ENCODE measurements at regions of chr16 and their contacts with region 1.

Region 1: DNA sequence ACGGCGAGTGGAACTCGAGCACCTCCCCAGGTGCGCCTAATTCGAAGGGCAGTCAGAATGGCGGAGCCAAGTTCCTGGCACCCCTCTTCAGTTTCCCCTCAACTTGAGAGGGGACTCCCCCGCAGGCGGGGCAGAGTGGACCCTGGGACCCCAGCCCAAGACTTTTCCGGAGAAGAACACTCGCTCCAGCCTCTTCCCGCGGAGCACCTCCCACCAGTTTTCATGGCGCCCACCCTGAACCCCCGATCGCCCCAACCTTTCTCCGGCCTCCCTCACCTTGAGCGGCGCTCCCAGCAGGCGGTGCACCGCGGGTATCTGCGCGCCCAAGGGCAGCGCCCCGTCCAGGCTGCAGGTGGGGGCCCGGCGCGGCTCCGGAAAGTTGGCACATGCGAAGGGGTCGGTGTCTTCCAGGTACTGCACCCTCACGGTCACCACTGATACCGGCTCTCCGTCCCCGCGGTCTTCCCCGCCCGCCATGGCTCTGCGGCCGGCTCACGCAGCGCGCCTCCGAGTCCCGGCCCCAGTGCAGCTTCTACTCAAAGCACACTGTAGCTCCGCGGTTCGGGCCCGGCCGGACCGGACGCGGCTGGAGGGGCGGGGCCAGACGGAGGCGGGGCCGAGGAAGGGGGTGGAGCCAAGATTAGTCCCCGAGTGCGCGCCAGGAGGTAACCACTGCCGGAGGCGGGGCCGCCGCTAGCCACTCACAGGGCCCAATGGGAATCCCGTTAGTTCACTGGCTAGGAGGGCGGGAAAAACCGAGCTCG is at the start of gene FHOD1:
- DNase-seq: peak; percentile 83
- ATAC-seq: peak; percentile 64
- H3K4me3 ChIP-seq: peak within 1 kb of the TSS; percentile 71 to 92
- H3K27ac ChIP-seq: peak within 1 kb of the TSS; percentile 92
- H3K4me1 ChIP-seq: peaks cover 39 to 67% of the 10 kb centered on the region in 2 experiments
- H3K27me3 ChIP-seq: no peaks in the 10 kb centered on the region
- CTCF ChIP-seq: no peak
- POLR2A ChIP-seq: peak; percentile 41
- RAD21 ChIP-seq: no peak
- total RNA-seq, gene FHOD1: 69.2 TPM

Region 2: DNA sequence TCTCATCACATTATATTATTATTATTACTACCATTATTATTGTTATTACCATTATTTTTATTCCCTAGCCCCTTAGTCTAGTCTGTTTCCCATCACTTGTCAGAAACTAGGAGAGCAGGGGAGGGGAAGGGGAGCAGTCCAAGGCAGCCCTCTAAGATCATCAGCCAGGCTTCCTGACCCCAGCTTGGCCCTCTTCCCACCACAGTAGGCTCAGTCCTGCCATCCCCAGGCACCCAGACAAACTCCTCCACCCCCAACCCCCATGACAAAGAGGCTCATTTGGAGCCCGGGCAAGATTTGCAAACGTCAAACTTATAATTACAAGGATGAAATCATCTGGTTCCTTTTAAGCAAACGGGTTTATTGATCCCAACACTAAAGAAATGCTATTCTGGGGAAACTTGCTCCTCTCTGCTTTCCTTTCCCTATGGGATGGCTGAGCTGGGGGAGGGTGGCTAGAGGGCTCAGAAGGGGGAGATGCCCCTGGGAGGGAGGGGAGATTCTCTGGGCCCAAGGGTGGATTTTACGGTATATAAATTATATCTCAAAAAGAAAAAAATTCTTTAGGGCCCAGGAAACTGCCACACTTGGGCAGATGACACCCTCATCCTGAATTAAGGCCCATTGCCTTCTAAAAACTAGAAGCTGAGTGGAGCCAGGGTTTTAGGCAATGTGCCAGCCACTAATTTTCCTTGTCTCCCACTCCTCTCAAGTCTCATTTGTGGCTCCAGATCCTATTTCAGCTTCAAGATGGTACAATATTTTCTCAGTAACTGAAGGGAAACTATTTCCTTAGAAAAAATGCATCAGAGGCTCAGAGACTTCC is 222.5 kb before region 1 on chr16:
- CTCF ChIA-PET with region 1: no interaction called
- POLR2A ChIA-PET with region 1: no interaction called
- RAD21 ChIA-PET with region 1: no interaction called
- intact Hi-C with region 1: no loop called
- DNase-seq: no peak
- ATAC-seq: no peak
- H3K4me3 ChIP-seq: no peak overlapping the region
- H3K27ac ChIP-seq: no peak overlapping the region
- H3K4me1 ChIP-seq: peaks cover 4 to 14% of the 10 kb centered on the region in 2 experiments; a peak in 3 of 4 replicates
- H3K27me3 ChIP-seq: no peaks in the 10 kb centered on the region
- CTCF ChIP-seq: no peak
- POLR2A ChIP-seq: no peak
- RAD21 ChIP-seq: no peak

Region 3: DNA sequence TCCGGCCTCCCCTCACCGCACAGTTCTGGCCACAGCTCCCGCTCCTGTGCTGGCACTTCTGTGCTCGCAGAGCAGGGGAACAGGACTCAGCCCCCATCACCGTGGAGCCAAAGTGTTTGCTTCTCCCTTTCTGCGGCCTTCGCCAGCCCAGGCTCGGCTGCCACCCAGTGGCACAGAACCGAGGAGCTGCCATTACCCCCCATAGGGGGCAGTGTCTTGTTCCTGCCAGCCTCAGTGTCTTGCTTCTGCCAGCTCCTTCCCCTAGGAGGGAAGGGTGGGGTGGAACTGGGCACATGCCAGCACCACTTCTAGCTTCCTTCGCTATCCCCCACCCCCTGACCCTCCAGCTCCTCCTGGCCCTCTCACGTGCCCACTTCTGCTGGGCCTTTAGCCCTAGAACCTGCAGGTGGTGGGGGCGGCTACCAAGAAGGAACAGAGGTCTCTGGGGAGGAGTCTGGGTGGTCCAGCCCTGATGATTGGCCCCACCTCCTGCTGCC is 48.8 kb before region 1 on chr16:
- CTCF ChIA-PET with region 1: interaction called, 13 read pairs
- POLR2A ChIA-PET with region 1: interaction called, 11 read pairs
- RAD21 ChIA-PET with region 1: no interaction called
- intact Hi-C with region 1: no loop called
- DNase-seq: peak; percentile 64
- ATAC-seq: peak; percentile 67
- H3K4me3 ChIP-seq: peak overlapping the region; percentile 78
- H3K27ac ChIP-seq: peak overlapping the region; percentile 99
- H3K4me1 ChIP-seq: peaks cover 19 to 42% of the 10 kb centered on the region in 2 experiments
- H3K27me3 ChIP-seq: no peaks in the 10 kb centered on the region
- CTCF ChIP-seq: peak in 2 of 3 experiments; percentile 98; a peak in 4 of 6 replicates
- POLR2A ChIP-seq: no peak
- RAD21 ChIP-seq: no peak

Region 4: DNA sequence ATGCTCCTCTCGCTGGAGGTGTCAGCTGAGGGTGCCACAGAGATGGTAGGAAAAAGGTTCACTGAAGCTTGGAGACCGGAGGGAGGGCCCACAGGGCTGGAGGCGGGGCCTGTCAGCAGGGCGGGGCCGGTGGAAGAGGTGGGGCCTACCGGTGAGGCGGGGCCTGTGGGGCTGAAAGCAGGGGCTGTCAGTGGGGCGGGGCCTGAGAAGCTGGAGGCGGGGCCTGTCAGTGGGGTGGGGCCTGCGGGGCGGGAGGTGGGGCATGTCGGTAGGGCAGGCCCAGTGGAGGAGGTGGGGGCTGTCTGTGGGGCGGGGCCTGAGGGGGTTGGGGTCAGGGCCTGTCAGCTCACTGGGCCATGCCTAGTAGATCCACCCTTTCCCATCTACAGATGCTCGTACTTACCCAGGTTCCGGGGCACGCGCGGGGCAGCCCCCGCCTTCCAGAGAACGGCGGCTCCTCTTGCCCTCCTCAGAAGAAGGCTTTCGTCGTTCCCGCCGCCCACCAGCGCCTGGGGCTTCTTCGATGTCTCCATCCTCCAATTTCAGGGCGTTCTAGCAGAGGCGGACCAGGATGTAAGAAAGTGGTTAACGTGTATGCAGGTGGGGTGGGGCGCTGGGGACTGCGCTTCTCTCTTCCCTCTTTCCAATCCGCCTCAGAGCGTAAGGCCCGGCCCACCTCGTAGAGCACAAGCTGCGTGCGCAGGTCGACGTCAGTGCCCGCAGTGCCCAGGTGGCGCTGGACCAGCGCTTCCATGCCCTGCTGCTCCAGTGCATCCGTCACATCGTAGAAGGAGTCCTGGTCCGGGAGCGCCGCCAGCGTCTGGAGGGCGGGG is 10.3 kb before region 1 on chr16:
- CTCF ChIA-PET with region 1: interaction called, 7 read pairs
- POLR2A ChIA-PET with region 1: interaction called, 13 read pairs
- RAD21 ChIA-PET with region 1: no interaction called
- intact Hi-C with region 1: no loop called
- DNase-seq: peak; percentile 69
- ATAC-seq: peak; percentile 88
- H3K4me3 ChIP-seq: no peak overlapping the region
- H3K27ac ChIP-seq: peak overlapping the region; percentile 39; the same call in 1 of the 2 replicates
- H3K4me1 ChIP-seq: peaks cover 14 to 33% of the 10 kb centered on the region in 2 experiments
- H3K27me3 ChIP-seq: no peaks in the 10 kb centered on the region
- CTCF ChIP-seq: no peak
- POLR2A ChIP-seq: no peak
- RAD21 ChIP-seq: no peak

Region 5: GRCh38 chr16:67268136-67268579 is 21.0 kb after region 1 on chr16:
- CTCF ChIA-PET with region 1: interaction called, 3 read pairs
- POLR2A ChIA-PET with region 1: interaction called, 12 read pairs
- RAD21 ChIA-PET with region 1: interaction called in 1 of 2 experiments, 3 read pairs
- intact Hi-C with region 1: no loop called
- DNase-seq: peak; percentile 81
- ATAC-seq: peak; percentile 90
- H3K4me3 ChIP-seq: peak overlapping the region in 1 of 2 experiments; percentile 25; a peak in 1 of 4 replicates
- H3K27ac ChIP-seq: peak overlapping the region; percentile 66
- H3K4me1 ChIP-seq: peaks cover 27 to 42% of the 10 kb centered on the region in 2 experiments
- H3K27me3 ChIP-seq: no peaks in the 10 kb centered on the region
- CTCF ChIP-seq: no peak
- POLR2A ChIP-seq: no peak
- RAD21 ChIP-seq: no peak

Region 6: DNA sequence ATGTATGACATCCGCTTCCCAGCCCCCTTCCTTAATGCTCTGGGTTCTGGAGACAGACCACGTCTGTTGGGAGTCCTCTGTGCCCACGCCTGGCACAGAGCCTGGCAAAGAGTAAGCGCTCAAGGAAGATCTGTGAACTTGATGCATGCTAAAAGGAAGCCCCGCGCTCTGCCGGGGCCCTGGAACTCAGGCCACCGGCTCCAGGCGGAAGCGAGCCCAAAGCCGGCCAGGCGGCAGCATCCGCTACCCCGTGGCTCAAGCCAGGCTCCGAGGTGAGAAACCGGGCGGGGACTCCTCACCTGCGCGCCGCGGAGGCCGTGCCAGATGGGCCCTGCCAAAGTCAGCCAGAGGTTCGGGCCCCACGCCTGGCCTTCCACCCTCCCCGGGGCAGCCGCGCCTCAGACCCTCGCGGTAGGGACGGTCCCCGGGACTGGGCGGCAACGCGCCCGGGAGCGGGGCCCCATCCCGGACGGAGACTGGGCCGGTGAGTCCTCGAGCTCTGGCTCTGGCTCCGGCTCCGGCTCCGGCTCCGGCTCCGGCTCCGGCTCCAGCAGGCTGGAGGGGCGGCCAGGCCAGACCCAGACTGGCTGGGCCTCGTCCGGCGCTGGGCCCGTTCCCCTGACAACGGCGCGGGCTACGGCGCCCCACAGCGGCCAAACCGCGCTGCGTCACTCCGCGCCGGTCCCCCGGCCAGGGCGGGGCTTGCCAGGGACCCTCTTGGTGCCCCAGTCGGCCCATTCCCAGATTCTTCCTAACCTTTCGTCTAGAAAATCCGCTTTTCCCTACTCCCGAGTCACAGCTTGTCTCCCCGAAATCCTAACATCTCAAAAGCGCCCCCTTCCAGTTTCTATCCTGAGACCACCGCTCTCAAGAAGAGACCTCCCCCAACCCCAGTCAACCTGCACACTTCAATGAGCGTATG is 169.0 kb after region 1 on chr16 and contains the start of gene ZDHHC1:
- CTCF ChIA-PET with region 1: no interaction called
- POLR2A ChIA-PET with region 1: no interaction called
- RAD21 ChIA-PET with region 1: interaction called in 1 of 2 experiments, 3 read pairs
- intact Hi-C with region 1: loop called (anchors 5 kb)
- DNase-seq: no peak
- ATAC-seq: peak; percentile 94
- H3K4me3 ChIP-seq: peak within 1 kb of the TSS; percentile 82 to 92
- H3K27ac ChIP-seq: peak within 1 kb of the TSS; percentile 76
- H3K4me1 ChIP-seq: peaks cover 10 to 19% of the 10 kb centered on the region in 2 experiments; a peak in 3 of 4 replicates
- H3K27me3 ChIP-seq: no peaks in the 10 kb centered on the region
- CTCF ChIP-seq: peak; percentile 6 to 52 (median 42); a peak in 3 of 6 replicates
- POLR2A ChIP-seq: peak; percentile 21
- RAD21 ChIP-seq: peak; percentile 72
- total RNA-seq, gene ZDHHC1: 9.1 TPM

Measured in HCT116 (cell line).